GM12878 (cell line): ENCODE measurements at regions of chr22 and their contacts with region 1.

Region 1: DNA sequence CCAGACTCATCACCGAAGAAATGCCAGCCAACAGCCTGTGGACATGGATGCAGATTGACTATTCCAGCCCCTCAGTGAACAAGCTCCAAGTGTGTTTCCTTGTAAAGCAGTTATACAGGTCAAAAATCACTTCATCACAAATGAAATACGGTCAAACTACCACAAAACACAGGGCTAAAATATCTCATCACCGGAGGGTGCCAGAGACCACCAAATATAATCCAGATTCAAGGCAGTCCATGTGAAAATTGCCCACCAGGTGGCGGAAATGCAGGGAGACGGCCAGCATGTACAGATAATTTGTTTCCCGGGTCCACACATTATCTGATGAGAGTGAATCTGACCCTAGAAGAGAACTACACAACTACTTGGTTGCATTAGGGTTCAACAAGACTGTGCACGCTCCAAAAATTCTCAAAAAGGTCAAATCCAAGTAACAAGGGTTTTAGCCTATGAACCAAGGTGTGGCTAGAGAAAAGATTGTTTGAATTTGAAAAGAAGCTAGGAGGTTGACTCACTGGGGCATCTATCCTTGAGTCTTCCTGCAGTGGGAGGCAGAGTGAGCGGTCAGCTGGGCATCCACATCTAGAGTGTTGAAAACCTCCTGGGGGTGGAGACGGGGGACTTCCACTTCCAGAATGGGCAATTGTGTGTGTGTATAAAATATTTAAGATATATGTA is 71.7 kb downstream of the IGLL5 start:
- DNase-seq: peak; percentile 56
- ATAC-seq: peak; percentile 66
- H3K4me3 ChIP-seq: no peak overlapping the region
- H3K27ac ChIP-seq: no peak overlapping the region
- H3K4me1 ChIP-seq: peaks cover 11% of the 10 kb centered on the region
- H3K27me3 ChIP-seq: no peaks in the 10 kb centered on the region
- CTCF ChIP-seq: peak; percentile 81 to 100 (median 95); a peak in 5 of 6 replicates
- EP300 ChIP-seq: no peak
- POLR2A ChIP-seq: no peak
- RAD21 ChIP-seq: peak; percentile 100

Region 2: DNA sequence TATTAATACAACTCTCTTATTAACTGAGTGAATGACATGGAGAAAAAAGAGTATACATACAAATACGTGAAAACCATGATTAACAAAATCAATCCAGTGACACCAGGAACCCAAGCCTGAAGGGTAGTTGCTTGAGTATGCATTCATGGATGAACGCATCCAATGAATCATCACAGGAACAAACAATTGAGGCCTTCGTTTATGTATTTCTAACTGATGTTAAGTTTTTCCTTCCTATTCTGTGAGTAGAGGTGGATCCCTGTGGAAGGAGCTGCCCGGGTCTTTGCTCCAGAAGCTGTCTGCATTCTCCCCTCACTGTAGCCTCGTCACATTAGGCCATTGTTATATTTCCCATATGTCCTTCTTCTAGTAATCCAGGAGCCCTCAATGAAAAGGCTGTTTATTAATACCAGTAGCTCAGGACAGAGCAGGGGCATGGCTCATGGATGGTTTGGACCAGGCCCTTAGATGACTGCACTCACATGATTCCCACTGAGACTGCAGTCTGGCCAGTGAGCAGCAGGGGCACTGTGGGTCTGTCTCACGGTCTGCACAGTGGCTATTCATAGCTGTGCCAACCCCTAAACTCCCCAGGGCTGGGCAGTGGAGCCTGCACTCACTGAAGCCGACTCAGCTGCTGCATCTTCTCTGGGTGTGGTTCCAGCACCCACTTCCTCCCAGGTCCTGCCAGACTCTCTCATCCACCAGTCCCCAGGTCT is 848.6 kb before region 1 on chr22:
- CTCF ChIA-PET with region 1: interaction called, 38 read pairs
- POLR2A ChIA-PET with region 1: interaction called, 3 read pairs
- RAD21 ChIA-PET with region 1: interaction called, 21 read pairs
- SMC1A ChIA-PET with region 1: interaction called, 13 read pairs
- in situ Hi-C with region 1: no loop called
- intact Hi-C with region 1: loop called (anchors 5 kb)
- DNase-seq: peak; percentile 93
- ATAC-seq: peak; percentile 97
- H3K4me3 ChIP-seq: no peak overlapping the region; the same call in 1 of the 2 replicates
- H3K27ac ChIP-seq: peak overlapping the region; percentile 88
- H3K4me1 ChIP-seq: peaks cover 18% of the 10 kb centered on the region
- H3K27me3 ChIP-seq: no peaks in the 10 kb centered on the region
- CTCF ChIP-seq: peak; percentile 77 to 89 (median 78)
- EP300 ChIP-seq: peak in 1 of 2 experiments; percentile 61; a peak in 1 of 4 replicates
- POLR2A ChIP-seq: no peak
- RAD21 ChIP-seq: peak; percentile 52

Region 3: DNA sequence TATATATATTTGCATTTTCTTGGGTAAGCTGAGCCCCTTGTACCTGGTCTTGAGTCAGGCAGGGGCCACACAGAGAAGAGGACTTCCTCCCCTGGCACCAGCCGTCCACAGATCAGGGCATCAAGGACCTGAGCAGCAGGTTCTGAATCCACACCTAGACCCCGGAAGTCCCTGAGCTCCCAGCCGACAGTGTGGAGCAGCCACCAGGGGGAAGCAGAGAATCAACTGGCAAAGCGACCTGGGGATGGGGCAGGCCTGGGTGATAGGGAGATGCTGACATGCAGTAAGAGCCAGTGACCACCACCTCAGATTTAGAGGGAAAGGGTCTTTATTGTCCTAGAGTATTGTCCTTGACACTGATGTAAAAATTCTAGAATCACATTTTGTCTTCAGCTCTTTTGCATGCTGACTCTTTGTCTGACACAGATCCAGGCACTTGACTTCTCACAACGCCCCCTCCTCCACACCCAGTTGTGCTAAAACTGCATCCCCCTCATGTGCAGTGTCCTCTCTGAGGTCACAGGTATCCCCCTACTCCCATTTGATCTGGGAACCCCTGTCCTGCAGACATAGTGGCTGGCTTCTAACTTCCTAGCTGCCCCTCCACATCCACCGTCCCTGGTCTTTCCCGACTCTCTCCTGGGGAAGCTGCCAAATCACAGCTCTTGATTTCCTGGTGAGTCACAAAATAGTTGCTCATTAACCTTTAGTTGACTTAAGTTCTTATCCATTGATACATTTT is 205.6 kb before region 1 on chr22:
- CTCF ChIA-PET with region 1: interaction called, 86 read pairs
- POLR2A ChIA-PET with region 1: interaction called, 4 read pairs
- RAD21 ChIA-PET with region 1: interaction called, 41 read pairs
- SMC1A ChIA-PET with region 1: interaction called, 27 read pairs
- in situ Hi-C with region 1: no loop called
- intact Hi-C with region 1: loop called (anchors 1 kb)
- DNase-seq: no peak
- ATAC-seq: peak; percentile 98
- H3K4me3 ChIP-seq: no peak overlapping the region
- H3K27ac ChIP-seq: no peak overlapping the region
- H3K4me1 ChIP-seq: no peaks in the 10 kb centered on the region
- H3K27me3 ChIP-seq: no peaks in the 10 kb centered on the region
- CTCF ChIP-seq: peak; percentile 38 to 76 (median 67); a peak in 5 of 6 replicates
- EP300 ChIP-seq: no peak
- POLR2A ChIP-seq: no peak
- RAD21 ChIP-seq: no peak

Region 4: DNA sequence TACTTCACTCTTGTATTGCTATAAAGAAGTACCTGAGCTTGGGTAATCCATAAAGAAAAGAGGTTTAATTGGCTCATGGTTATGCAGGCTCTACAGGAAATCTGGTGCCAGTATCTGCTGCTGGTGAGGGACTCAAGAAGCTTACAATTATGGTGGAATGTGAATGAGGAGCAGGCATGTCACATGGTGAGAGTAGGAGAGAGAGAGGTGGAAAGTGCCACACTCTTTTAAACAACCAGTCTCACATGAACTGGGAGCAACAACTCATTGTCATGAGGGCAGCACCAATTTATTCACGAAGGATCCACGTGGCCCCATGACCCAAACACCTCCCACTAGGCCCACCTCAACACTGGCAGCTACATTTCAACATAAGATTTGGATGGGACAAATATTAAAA is 96.3 kb before region 1 on chr22:
- CTCF ChIA-PET with region 1: no interaction called
- POLR2A ChIA-PET with region 1: no interaction called
- RAD21 ChIA-PET with region 1: no interaction called
- SMC1A ChIA-PET with region 1: no interaction called
- in situ Hi-C with region 1: no loop called
- intact Hi-C with region 1: no loop called
- DNase-seq: no peak
- ATAC-seq: no peak
- H3K4me3 ChIP-seq: no peak overlapping the region
- H3K27ac ChIP-seq: no peak overlapping the region
- H3K4me1 ChIP-seq: no peaks in the 10 kb centered on the region
- H3K27me3 ChIP-seq: no peaks in the 10 kb centered on the region
- CTCF ChIP-seq: no peak
- EP300 ChIP-seq: no peak
- POLR2A ChIP-seq: no peak
- RAD21 ChIP-seq: no peak

Region 5: GRCh38 chr22:22884010-22884887 is 75.0 kb before region 1 on chr22:
- CTCF ChIA-PET with region 1: no interaction called
- POLR2A ChIA-PET with region 1: no interaction called
- RAD21 ChIA-PET with region 1: no interaction called
- SMC1A ChIA-PET with region 1: no interaction called
- in situ Hi-C with region 1: no loop called
- intact Hi-C with region 1: no loop called
- DNase-seq: no peak
- ATAC-seq: no peak
- H3K4me3 ChIP-seq: no peak overlapping the region
- H3K27ac ChIP-seq: no peak overlapping the region
- H3K4me1 ChIP-seq: no peaks in the 10 kb centered on the region; the same call in 1 of the 2 replicates
- H3K27me3 ChIP-seq: no peaks in the 10 kb centered on the region
- CTCF ChIP-seq: no peak; a peak in 1 of 6 replicates
- EP300 ChIP-seq: no peak
- POLR2A ChIP-seq: no peak
- RAD21 ChIP-seq: no peak

Region 6: GRCh38 chr22:22903355-22903777 is 55.9 kb before region 1 on chr22:
- CTCF ChIA-PET with region 1: interaction called, 25 read pairs
- POLR2A ChIA-PET with region 1: interaction called, 13 read pairs
- RAD21 ChIA-PET with region 1: interaction called, 25 read pairs
- SMC1A ChIA-PET with region 1: interaction called, 25 read pairs
- in situ Hi-C with region 1: no loop called
- intact Hi-C with region 1: no loop called
- DNase-seq: no peak
- ATAC-seq: peak; percentile 0; the same call in 1 of the 3 replicates
- H3K4me3 ChIP-seq: no peak overlapping the region
- H3K27ac ChIP-seq: peak overlapping the region; percentile 93
- H3K4me1 ChIP-seq: peaks cover 28% of the 10 kb centered on the region
- H3K27me3 ChIP-seq: no peaks in the 10 kb centered on the region
- CTCF ChIP-seq: no peak
- EP300 ChIP-seq: no peak
- POLR2A ChIP-seq: no peak
- RAD21 ChIP-seq: no peak

Region 7: DNA sequence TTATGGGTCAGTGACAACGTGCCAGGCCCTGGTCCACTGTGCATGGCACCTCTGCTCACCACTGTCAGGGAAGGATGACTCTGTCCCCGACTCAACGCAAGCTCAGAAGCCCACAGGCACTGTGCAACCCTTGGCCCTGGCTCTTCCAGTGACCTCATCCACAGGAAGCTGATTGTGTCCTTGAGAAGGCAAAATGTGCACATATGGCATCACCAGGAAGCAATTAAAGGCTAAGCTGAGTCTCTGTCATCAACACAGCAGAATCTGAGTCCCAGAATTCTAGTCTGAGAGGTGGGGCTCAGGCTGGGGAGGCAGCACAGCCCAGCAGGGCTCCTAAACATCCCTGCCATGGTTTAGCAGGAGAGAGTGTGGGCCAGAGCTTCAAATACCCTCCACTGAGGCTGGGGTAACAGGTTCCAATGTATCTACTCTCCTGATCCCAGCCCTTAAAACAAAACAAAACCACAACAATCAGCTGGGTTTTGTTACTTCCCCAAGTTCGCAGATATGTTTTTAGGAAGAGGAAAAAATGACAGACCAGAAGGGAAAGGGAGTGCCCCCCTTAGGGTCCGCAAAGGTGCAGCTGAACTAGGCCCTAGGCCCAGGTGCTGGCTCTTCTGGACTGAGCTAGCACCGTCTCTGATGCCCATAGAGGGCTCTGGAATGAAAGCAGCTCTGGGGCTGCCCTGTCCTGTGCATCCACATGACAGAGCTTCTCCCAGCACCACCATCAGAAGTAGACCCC is 77.6 kb after region 1 on chr22:
- CTCF ChIA-PET with region 1: interaction called, 20 read pairs
- POLR2A ChIA-PET with region 1: no interaction called
- RAD21 ChIA-PET with region 1: interaction called, 3 read pairs
- SMC1A ChIA-PET with region 1: interaction called, 12 read pairs
- in situ Hi-C with region 1: no loop called
- intact Hi-C with region 1: no loop called
- DNase-seq: no peak
- ATAC-seq: no peak
- H3K4me3 ChIP-seq: no peak overlapping the region
- H3K27ac ChIP-seq: no peak overlapping the region
- H3K4me1 ChIP-seq: peaks cover 13% of the 10 kb centered on the region
- H3K27me3 ChIP-seq: no peaks in the 10 kb centered on the region
- CTCF ChIP-seq: no peak
- EP300 ChIP-seq: no peak
- POLR2A ChIP-seq: no peak
- RAD21 ChIP-seq: no peak

Region 8: DNA sequence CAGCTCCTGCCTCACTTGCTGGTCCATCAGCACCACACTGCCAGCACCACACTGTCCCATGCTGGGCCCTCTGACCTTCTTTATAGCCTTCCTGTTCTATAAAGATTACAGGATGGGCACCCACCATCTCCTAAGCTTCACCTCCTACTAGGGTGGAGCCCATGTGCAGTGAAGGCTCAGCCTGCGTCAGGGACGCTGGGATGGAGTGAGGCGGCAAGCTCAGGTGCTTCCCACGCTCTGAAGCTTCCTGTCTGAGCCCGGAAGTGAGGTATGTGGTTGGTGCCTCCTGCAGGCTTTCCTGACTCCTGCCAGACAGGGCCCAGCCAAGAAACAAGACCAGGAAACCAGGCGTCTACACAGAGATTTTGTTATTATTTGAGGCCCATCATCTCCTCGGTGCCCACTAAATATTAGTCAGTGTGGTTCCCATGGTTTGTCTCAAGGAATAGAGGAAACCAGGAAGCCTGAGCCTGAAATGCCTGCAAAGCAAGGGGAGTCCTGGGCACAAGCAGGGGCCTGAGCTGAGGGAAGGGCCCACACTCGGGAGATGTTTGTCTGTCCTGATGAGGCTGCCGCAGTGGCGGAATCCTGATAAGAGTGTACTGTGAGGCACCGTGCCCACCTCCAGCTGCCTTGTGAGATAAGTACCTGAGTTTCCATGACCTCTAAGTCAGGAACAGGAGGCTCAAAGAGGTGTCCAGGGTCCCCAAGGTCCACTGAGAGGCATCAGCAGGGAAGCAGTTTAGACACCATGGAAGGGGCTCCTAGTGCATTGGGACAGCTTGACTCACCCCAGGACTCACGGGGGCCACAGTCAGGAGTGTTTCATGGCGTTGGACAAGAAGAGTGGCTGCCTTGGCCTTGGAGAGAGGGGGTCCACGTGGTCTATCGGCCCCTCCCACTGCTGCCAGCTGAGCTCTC is 160.5 kb after region 1 on chr22:
- CTCF ChIA-PET with region 1: interaction called, 211 read pairs
- POLR2A ChIA-PET with region 1: interaction called, 6 read pairs
- RAD21 ChIA-PET with region 1: interaction called, 281 read pairs
- SMC1A ChIA-PET with region 1: interaction called, 82 read pairs
- in situ Hi-C with region 1: no loop called
- intact Hi-C with region 1: no loop called
- DNase-seq: no peak
- ATAC-seq: peak; percentile 56
- H3K4me3 ChIP-seq: no peak overlapping the region
- H3K27ac ChIP-seq: no peak overlapping the region
- H3K4me1 ChIP-seq: no peaks in the 10 kb centered on the region
- H3K27me3 ChIP-seq: no peaks in the 10 kb centered on the region
- CTCF ChIP-seq: no peak
- EP300 ChIP-seq: no peak
- POLR2A ChIP-seq: no peak
- RAD21 ChIP-seq: no peak

Region 9: GRCh38 chr22:23385291-23386244 is 426.3 kb after region 1 on chr22:
- CTCF ChIA-PET with region 1: interaction called, 28 read pairs
- POLR2A ChIA-PET with region 1: no interaction called
- RAD21 ChIA-PET with region 1: interaction called, 29 read pairs
- SMC1A ChIA-PET with region 1: interaction called, 20 read pairs
- in situ Hi-C with region 1: loop called (anchors 10 kb)
- intact Hi-C with region 1: loop called (anchors 1 kb)
- DNase-seq: peak; percentile 36
- ATAC-seq: peak; percentile 97
- H3K4me3 ChIP-seq: no peak overlapping the region
- H3K27ac ChIP-seq: no peak overlapping the region
- H3K4me1 ChIP-seq: no peaks in the 10 kb centered on the region
- H3K27me3 ChIP-seq: no peaks in the 10 kb centered on the region
- CTCF ChIP-seq: peak; percentile 95 to 97 (median 97); a peak in 5 of 6 replicates
- EP300 ChIP-seq: no peak
- POLR2A ChIP-seq: no peak
- RAD21 ChIP-seq: peak; percentile 96

Region 10: GRCh38 chr22:23675492-23676415 is 716.5 kb after region 1 on chr22:
- CTCF ChIA-PET with region 1: no interaction called
- POLR2A ChIA-PET with region 1: no interaction called
- RAD21 ChIA-PET with region 1: no interaction called
- SMC1A ChIA-PET with region 1: no interaction called
- in situ Hi-C with region 1: no loop called
- intact Hi-C with region 1: no loop called
- DNase-seq: no peak
- ATAC-seq: peak; percentile 44
- H3K4me3 ChIP-seq: no peak overlapping the region
- H3K27ac ChIP-seq: no peak overlapping the region
- H3K4me1 ChIP-seq: no peaks in the 10 kb centered on the region
- H3K27me3 ChIP-seq: no peaks in the 10 kb centered on the region
- CTCF ChIP-seq: no peak
- EP300 ChIP-seq: no peak
- POLR2A ChIP-seq: no peak
- RAD21 ChIP-seq: no peak

Region 11: DNA sequence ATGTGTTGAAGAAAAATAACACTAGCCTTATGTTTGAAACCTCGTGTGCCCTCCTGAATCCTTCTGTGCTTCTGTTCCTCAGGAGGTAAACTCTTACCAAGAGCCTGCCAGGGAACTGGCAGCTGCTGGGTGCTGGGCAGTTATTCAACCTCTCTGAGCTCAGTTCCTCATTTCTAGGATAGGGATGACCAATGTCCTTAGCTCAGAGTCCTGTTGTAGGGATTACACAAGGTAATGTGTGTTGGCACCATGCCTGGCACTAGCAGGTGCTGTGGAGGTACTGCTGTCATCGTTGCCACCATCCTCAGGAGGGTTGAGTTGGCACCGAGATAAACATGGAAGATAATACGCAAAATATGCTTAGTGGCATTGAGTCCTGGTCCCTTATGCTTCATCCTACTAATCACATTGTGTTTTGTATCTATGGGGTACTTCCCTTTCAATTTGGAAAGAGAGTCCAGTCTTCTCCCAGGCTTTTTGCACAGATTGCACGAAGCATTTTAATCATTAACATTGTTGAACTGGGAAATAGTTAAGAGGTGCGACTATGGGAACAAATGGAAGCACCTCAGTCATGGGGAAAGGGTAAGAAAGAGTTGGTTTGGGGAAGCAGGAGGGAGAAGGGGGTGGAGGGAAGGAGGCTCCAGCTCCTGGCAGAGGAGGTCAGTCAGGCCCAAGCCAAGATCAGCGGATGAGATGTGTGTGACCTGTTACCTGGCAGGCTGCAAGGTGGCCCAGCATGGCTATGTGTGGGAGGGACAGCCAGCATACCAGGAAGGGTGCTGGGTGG is 1108.5 kb after region 1 on chr22:
- CTCF ChIA-PET with region 1: no interaction called
- POLR2A ChIA-PET with region 1: no interaction called
- RAD21 ChIA-PET with region 1: no interaction called
- SMC1A ChIA-PET with region 1: no interaction called
- in situ Hi-C with region 1: no loop called
- intact Hi-C with region 1: no loop called
- DNase-seq: no peak
- ATAC-seq: no peak
- H3K4me3 ChIP-seq: no peak overlapping the region
- H3K27ac ChIP-seq: no peak overlapping the region
- H3K4me1 ChIP-seq: no peaks in the 10 kb centered on the region
- H3K27me3 ChIP-seq: no peaks in the 10 kb centered on the region
- CTCF ChIP-seq: no peak
- EP300 ChIP-seq: no peak
- POLR2A ChIP-seq: no peak
- RAD21 ChIP-seq: no peak